Activated CD4-positive, alpha-beta memory T cell treated with anti-CD3 and anti-CD28 coated beads, Interleukin-2, amount 10 ng/mL, durations not matched to agents 7 days and 5 days (primary cell): ENCODE measurements at regions of chr3 and their contacts with region 1.

Region 1: DNA sequence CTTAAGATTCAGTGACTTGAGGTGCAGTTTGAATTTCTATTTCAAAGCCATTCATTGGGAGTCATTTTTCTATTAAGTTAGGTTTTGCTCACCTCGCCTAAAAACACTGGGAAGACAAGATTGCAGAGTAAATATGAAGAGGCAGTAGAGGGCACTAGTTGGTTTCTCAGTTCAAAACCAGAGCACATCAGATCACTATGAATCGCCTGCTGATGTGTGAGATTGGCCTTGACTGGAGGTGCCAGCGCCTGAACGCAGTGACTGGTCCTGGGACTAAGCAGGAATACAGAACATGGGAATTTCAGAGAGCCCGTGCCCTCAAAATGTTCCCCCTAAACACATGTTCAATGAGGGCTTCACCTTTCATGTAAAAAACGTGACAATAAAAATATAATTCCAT is 229.0 kb downstream of the ITPR1 start:
- DNase-seq: peak; percentile 45
- H3K4me3 Mint-ChIP-seq: no peak overlapping the region
- H3K27ac Mint-ChIP-seq: peak overlapping the region; percentile 50
- H3K4me1 Mint-ChIP-seq: peaks cover 50% of the 10 kb centered on the region
- H3K27me3 Mint-ChIP-seq: no peaks in the 10 kb centered on the region

Region 2: GRCh38 chr3:5057857-5058324 is 335.8 kb after region 1 on chr3:
- CTCF ChIA-PET with region 1: interaction called, 20 read pairs
- POLR2A ChIA-PET with region 1: interaction called, 3 read pairs
- DNase-seq: peak; percentile 86
- H3K4me3 Mint-ChIP-seq: no peak overlapping the region
- H3K27ac Mint-ChIP-seq: no peak overlapping the region
- H3K4me1 Mint-ChIP-seq: peaks cover 50% of the 10 kb centered on the region
- H3K27me3 Mint-ChIP-seq: peaks cover 10% of the 10 kb centered on the region